ENCODE measurements at regions of chr10 and their contacts with region 1.

Region 1: DNA sequence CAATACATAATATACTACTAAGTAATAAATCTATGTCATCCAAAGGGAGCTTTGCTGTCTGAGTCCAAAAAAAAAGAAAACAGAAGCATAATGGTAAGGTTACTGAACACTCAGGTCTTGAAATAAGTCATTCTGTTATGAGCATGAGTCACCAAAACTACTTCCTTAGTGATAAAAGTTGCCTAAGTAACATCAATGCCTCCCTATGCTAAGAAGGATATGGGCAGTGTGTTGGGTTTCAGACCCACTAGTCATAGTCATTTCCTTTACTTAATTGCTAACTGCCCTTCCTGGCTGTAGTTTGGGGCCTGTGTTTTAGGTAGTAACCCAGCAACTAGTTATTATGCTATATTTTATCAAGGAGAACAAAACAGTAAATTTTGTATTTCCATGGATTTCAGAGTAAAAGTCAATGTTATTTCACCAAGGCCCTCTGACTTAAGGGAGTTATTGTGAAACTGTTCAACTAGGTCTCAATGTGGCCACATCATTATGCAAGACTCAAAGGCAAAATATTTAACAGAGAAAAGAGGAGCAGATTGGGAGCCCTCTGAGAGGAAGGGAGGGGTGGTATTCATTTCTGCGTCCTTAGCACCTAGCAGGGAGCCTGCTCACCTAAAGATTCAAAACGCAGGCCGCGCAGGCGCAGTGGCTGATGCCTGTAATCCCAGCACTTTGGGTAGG is 11.7 kb upstream of the VIM start:
- DNase-seq: peak in 4 of 5 donors; percentile 36 to 72 (median 47)
- H3K4me3 ChIP-seq: no peak overlapping the region
- H3K4me3 Mint-ChIP-seq: no peak overlapping the region
- H3K27ac ChIP-seq: peak overlapping the region; percentile 56
- H3K27ac Mint-ChIP-seq: peak overlapping the region; percentile 78 to 93 (median 87)
- H3K4me1 ChIP-seq: peaks cover 17% of the 10 kb centered on the region
- H3K4me1 Mint-ChIP-seq: peaks cover 8 to 39% (median 11%) of the 10 kb centered on the region in 4 donors
- H3K27me3 ChIP-seq: no peaks in the 10 kb centered on the region
- H3K27me3 Mint-ChIP-seq: no peaks in the 10 kb centered on the region

Region 2: DNA sequence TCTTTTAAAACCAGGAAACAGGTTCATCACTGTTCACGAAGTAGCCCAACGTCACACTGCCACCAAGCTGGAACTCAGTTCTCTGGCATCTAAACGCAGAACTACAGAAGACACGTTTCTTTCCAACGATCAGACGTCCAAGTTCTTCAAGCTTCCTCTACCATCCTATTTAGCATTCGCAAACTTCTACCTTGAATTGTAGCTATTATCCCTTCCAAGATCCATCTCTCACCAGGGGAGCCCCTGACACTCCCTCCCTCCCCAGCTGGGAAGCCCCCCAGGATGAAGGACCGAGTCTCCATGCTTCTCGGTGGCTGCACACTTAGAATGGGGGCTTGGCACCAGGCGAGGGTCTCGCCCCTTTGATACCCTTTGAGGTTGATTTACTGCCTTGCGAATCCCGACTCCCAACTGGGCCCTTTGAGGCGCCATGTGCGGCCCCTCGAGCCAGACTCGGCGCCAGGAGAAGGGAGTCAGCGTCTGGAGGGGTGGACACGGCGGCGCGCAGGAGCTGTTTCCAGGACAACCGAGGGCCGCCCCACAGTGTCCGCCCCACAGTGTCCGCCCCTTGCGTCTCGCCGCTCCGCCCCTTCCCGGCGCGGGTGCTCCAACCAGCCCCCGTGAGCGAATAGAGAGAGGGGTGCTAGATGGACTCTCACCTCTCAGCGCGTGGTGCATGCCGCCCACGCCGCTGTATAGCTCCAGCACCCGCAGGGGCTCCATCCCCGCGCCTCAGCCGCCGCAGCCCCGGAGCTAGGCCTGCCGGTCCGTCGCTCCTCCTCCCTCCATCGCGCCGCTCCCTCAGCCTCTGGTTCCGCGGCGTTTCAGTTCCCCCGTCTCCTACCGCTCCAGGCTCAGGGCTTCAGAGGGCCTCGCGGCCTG is 15.2 kb before region 1 on chr10 and contains the start of gene TRDMT1:
- CTCF ChIA-PET with region 1: interaction called, 9 read pairs
- POLR2A ChIA-PET with region 1: interaction called, 15 read pairs
- intact Hi-C with region 1: no loop called
- DNase-seq: peak; percentile 79 to 84 (median 80)
- H3K4me3 ChIP-seq: peak within 1 kb of the TSS; percentile 72 to 89
- H3K4me3 Mint-ChIP-seq: peak within 1 kb of the TSS; percentile 91 to 98 (median 95)
- H3K27ac ChIP-seq: peak within 1 kb of the TSS; percentile 95
- H3K27ac Mint-ChIP-seq: peak within 1 kb of the TSS; percentile 98 to 99 (median 99)
- H3K4me1 ChIP-seq: peaks cover 27% of the 10 kb centered on the region
- H3K4me1 Mint-ChIP-seq: peaks cover 22 to 56% (median 40%) of the 10 kb centered on the region in 4 donors
- H3K27me3 ChIP-seq: no peaks in the 10 kb centered on the region
- H3K27me3 Mint-ChIP-seq: no peaks in the 10 kb centered on the region
- total RNA-seq, gene TRDMT1: 20.2 to 21.3 TPM

Measured in CD4-positive, alpha-beta memory T cell (primary cell).